ENCODE measurements at regions of chr12 and their contacts with region 1.

Region 1: DNA sequence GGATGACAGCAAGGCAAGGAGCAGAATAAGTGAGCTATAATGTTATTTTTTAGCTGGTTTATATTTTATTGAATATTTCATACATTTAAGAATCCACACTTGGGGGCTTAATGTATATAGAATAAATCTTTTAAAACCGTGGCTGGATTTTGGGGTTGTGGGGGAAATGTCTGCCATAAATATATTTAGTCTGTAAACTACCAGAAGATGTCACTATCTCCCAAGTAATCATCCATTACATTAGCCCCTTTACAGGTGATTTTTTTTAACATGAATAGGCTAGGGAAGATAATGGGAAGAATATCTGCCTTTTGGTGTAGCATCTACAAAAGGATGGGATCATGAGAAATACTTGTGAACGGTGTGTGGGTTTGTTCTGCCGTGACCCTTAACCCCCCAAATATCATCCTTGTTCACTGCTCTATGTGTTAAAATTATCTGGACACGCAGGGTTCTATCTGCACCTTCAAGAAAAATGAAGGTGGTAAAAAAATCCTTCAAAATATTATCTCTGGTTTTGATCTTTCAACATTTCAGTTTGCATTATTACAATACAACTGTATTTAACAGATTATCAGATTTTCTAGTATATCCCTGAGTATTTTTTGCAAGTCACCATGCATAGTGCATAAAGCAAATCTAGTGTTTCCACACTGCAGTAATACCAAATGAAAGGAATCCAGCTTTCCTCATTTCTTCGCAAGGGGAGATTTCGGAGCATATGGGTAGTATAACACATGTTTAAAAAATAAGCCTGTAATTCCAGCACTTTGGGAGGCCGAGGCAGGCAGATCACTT is 8.0 kb upstream of the SLC17A8 start:
- DNase-seq: peak; percentile 66
- ATAC-seq: peak; percentile 74
- H3K4me3 ChIP-seq: no peak overlapping the region
- H3K27ac ChIP-seq: no peak overlapping the region
- H3K4me1 ChIP-seq: no peaks in the 10 kb centered on the region
- H3K27me3 ChIP-seq: peaks cover 40% of the 10 kb centered on the region
- CTCF ChIP-seq: peak; percentile 73

Region 2: GRCh38 chr12:100234598-100235304 is 114.1 kb before region 1 on chr12:
- CTCF ChIA-PET with region 1: interaction called, 3 read pairs
- POLR2A ChIA-PET with region 1: no interaction called
- intact Hi-C with region 1: loop called (anchors 2 kb)
- DNase-seq: peak; percentile 81
- ATAC-seq: peak; percentile 65
- H3K4me3 ChIP-seq: peak overlapping the region; percentile 53
- H3K27ac ChIP-seq: peak overlapping the region; percentile 66
- H3K4me1 ChIP-seq: peaks cover 34% of the 10 kb centered on the region
- H3K27me3 ChIP-seq: no peaks in the 10 kb centered on the region
- CTCF ChIP-seq: peak; percentile 93

Region 3: DNA sequence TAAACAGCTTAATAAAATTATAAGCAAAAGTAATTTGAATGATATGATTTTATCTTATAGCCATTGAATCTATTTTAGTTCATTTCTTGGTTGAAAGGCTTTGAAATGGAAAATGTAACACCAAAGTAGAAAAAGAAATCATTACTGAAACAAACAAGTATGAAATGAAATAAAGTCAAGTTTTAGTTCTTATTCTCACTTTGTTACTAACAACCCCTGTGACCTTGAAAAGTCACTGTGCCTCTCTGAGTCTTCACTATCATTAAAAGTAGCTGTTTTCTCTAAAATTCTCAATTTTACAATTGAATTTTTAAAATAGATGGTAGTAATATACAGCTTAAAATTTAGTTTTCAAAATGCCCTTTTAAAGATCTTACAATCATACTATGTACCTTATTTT is 24.4 kb before region 1 on chr12:
- CTCF ChIA-PET with region 1: interaction called, 10 read pairs
- POLR2A ChIA-PET with region 1: no interaction called
- intact Hi-C with region 1: no loop called
- DNase-seq: no peak
- ATAC-seq: no peak
- H3K4me3 ChIP-seq: no peak overlapping the region
- H3K27ac ChIP-seq: no peak overlapping the region
- H3K4me1 ChIP-seq: no peaks in the 10 kb centered on the region
- H3K27me3 ChIP-seq: no peaks in the 10 kb centered on the region
- CTCF ChIP-seq: no peak

Region 4: GRCh38 chr12:100359822-100360221 is 11.0 kb after region 1 on chr12:
- CTCF ChIA-PET with region 1: no interaction called
- POLR2A ChIA-PET with region 1: no interaction called
- intact Hi-C with region 1: no loop called
- DNase-seq: peak; percentile 23
- ATAC-seq: peak; percentile 45
- H3K4me3 ChIP-seq: no peak overlapping the region
- H3K27ac ChIP-seq: no peak overlapping the region
- H3K4me1 ChIP-seq: no peaks in the 10 kb centered on the region
- H3K27me3 ChIP-seq: peaks cover 55% of the 10 kb centered on the region
- CTCF ChIP-seq: no peak

Region 5: DNA sequence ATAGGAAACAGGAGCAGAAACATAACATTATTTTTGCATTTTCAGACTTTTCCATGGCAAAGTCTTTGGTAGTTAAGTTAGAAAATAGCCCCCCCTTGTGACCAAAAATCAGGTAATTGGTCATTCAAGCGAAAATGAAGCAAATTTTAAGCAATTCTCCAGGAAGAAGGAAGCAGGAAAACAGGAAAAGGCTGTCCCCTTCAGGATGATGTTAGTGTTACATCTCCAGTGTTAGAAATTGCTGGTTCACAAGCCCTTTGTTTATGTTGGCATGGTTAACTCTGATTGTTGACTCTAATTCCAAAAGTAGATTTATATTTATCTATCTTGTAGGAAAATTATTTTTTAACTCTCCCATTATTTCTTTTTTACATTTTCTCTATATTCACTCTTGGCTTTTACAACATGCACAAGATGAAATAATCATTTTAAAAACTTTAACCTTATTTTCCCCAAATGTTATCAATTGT is 205.8 kb after region 1 on chr12:
- CTCF ChIA-PET with region 1: interaction called, 6 read pairs
- POLR2A ChIA-PET with region 1: no interaction called
- intact Hi-C with region 1: loop called (anchors 1 kb)
- DNase-seq: peak; percentile 92
- ATAC-seq: peak; percentile 88
- H3K4me3 ChIP-seq: no peak overlapping the region
- H3K27ac ChIP-seq: no peak overlapping the region
- H3K4me1 ChIP-seq: no peaks in the 10 kb centered on the region
- H3K27me3 ChIP-seq: 0 out of 2 replicates have a peak, but pooled peaks cover 6% of the 10 kb centered on the region
- CTCF ChIP-seq: peak; percentile 98

Region 6: DNA sequence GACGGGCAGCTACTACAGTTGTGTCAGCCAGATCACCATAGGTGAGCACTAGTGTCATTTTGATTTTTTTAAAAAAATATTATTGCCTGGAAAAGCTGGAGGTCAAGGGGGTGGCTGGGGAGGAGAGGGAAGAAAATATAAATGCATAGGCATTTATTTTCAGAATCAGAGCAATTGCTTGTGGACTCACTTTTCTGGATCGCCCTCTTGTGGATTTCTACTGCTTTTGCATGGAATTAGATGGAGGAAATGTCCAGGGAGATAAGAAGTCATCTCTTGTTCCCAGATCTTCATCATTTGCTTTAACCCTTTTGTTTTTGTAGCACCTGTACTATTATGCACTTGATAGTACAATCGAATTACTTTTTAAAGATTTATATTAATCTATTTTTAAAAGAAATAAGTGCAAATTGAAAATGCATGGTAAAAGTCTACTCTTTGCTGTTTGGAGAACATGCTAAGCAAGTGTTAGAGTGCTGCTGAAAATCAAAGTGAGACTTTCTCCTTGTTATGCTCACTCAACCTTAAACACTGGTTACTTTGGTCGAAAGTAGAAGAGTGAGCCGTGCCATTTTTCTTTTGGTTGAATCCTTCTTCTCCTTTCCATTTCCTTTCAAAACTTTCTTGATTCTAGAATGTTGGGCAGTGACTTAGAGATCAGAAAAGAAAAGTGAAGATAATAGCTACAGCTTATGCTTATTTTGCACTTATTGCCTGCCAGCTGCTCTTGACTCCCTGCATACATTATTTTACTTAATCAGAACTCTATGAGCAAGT is 385.1 kb after region 1 on chr12:
- CTCF ChIA-PET with region 1: no interaction called
- POLR2A ChIA-PET with region 1: interaction called, 3 read pairs
- intact Hi-C with region 1: loop called (anchors 1 kb)
- DNase-seq: peak; percentile 55
- ATAC-seq: no peak
- H3K4me3 ChIP-seq: no peak overlapping the region
- H3K27ac ChIP-seq: no peak overlapping the region
- H3K4me1 ChIP-seq: no peaks in the 10 kb centered on the region
- H3K27me3 ChIP-seq: peaks cover 24% of the 10 kb centered on the region
- CTCF ChIP-seq: peak; percentile 65

Region 7: GRCh38 chr12:100741084-100741711 is 392.3 kb after region 1 on chr12:
- CTCF ChIA-PET with region 1: no interaction called
- POLR2A ChIA-PET with region 1: interaction called, 3 read pairs
- intact Hi-C with region 1: loop called (anchors 1 kb)
- DNase-seq: peak; percentile 72
- ATAC-seq: peak; percentile 64
- H3K4me3 ChIP-seq: no peak overlapping the region
- H3K27ac ChIP-seq: no peak overlapping the region
- H3K4me1 ChIP-seq: no peaks in the 10 kb centered on the region
- H3K27me3 ChIP-seq: peaks cover 16% of the 10 kb centered on the region
- CTCF ChIP-seq: peak; percentile 93

Region 8: GRCh38 chr12:101323255-101323654 is 974.4 kb after region 1 on chr12:
- CTCF ChIA-PET with region 1: no interaction called
- POLR2A ChIA-PET with region 1: no interaction called
- intact Hi-C with region 1: loop called (anchors 1 kb)
- DNase-seq: peak; percentile 9
- ATAC-seq: no peak
- H3K4me3 ChIP-seq: no peak overlapping the region
- H3K27ac ChIP-seq: no peak overlapping the region
- H3K4me1 ChIP-seq: no peaks in the 10 kb centered on the region
- H3K27me3 ChIP-seq: no peaks in the 10 kb centered on the region
- CTCF ChIP-seq: no peak

Measured in PC-3 (cell line).